B cell (primary cell): ENCODE measurements at regions of chr1 and their contacts with region 1.

Region 1: DNA sequence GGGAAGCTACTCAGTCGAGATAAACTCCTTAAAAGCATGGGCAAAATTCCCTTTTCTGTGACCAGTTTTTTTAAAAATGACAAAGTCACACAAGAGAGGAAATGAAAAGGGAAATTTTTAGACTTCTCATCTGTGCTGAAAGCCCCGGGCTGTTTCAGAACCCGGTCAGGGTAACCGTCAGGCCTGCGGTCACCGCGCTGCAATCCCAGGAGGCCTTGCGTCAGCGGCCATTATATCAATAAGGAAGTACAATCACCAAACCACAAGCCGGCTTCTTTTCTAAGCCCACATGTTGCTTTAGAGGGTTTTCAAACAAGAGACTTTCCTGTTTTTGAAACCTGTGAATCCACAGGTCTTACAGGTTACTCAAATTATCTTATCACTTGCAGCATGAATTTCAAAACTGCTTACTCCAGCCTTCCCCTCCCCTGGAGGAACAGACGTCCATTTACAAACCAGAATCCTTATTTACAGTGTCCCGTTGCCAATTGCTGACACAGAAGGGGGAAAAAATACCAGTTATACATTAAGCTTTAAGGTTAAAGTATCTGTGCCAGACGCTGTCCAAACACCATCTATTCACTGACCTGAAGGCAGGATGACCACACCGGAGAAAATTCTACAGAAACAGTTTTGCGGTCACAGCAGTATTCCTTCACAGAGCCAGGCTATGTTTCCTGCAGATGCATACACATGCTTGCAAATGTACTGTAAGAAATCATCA is 165.3 kb downstream of the TOMM20 start:
- DNase-seq: peak; percentile 95
- ATAC-seq: peak; percentile 94
- H3K4me3 ChIP-seq: peak overlapping the region in 4 of 5 experiments; percentile 20 to 53 (median 35)
- H3K4me3 Mint-ChIP-seq: peak overlapping the region; percentile 88
- H3K27ac ChIP-seq: peak overlapping the region; percentile 83 to 90
- H3K27ac Mint-ChIP-seq: peak overlapping the region; percentile 96
- H3K4me1 ChIP-seq: peaks cover 50 to 62% of the 10 kb centered on the region in 2 donors
- H3K4me1 Mint-ChIP-seq: peaks cover 59% of the 10 kb centered on the region
- H3K27me3 ChIP-seq: no peaks in the 10 kb centered on the region
- H3K27me3 Mint-ChIP-seq: no peaks in the 10 kb centered on the region
- CTCF ChIP-seq: no peak

Region 2: GRCh38 chr1:234170622-234171021 is 792.7 kb before region 1 on chr1:
- CTCF ChIA-PET with region 1: no interaction called
- POLR2A ChIA-PET with region 1: no interaction called
- intact Hi-C with region 1: no loop called
- DNase-seq: no peak
- ATAC-seq: no peak
- H3K4me3 ChIP-seq: no peak overlapping the region
- H3K4me3 Mint-ChIP-seq: no peak overlapping the region
- H3K27ac ChIP-seq: no peak overlapping the region
- H3K27ac Mint-ChIP-seq: no peak overlapping the region
- H3K4me1 ChIP-seq: no peaks in the 10 kb centered on the region
- H3K4me1 Mint-ChIP-seq: no peaks in the 10 kb centered on the region
- H3K27me3 ChIP-seq: peaks cover 0 to 6% (median 0%) of the 10 kb centered on the region in 4 experiments
- H3K27me3 Mint-ChIP-seq: peaks cover 12% of the 10 kb centered on the region
- CTCF ChIP-seq: no peak

Region 3: GRCh38 chr1:234842726-234843641 is 120.4 kb before region 1 on chr1:
- CTCF ChIA-PET with region 1: no interaction called
- POLR2A ChIA-PET with region 1: no interaction called
- intact Hi-C with region 1: loop called (anchors 10 kb)
- DNase-seq: peak; percentile 49
- ATAC-seq: peak; percentile 65
- H3K4me3 ChIP-seq: no peak overlapping the region
- H3K4me3 Mint-ChIP-seq: peak overlapping the region; percentile 50
- H3K27ac ChIP-seq: no peak overlapping the region
- H3K27ac Mint-ChIP-seq: peak overlapping the region; percentile 11
- H3K4me1 ChIP-seq: peaks cover 25 to 33% of the 10 kb centered on the region in 2 donors
- H3K4me1 Mint-ChIP-seq: peaks cover 40% of the 10 kb centered on the region
- H3K27me3 ChIP-seq: no peaks in the 10 kb centered on the region
- H3K27me3 Mint-ChIP-seq: no peaks in the 10 kb centered on the region
- CTCF ChIP-seq: no peak

Region 4: DNA sequence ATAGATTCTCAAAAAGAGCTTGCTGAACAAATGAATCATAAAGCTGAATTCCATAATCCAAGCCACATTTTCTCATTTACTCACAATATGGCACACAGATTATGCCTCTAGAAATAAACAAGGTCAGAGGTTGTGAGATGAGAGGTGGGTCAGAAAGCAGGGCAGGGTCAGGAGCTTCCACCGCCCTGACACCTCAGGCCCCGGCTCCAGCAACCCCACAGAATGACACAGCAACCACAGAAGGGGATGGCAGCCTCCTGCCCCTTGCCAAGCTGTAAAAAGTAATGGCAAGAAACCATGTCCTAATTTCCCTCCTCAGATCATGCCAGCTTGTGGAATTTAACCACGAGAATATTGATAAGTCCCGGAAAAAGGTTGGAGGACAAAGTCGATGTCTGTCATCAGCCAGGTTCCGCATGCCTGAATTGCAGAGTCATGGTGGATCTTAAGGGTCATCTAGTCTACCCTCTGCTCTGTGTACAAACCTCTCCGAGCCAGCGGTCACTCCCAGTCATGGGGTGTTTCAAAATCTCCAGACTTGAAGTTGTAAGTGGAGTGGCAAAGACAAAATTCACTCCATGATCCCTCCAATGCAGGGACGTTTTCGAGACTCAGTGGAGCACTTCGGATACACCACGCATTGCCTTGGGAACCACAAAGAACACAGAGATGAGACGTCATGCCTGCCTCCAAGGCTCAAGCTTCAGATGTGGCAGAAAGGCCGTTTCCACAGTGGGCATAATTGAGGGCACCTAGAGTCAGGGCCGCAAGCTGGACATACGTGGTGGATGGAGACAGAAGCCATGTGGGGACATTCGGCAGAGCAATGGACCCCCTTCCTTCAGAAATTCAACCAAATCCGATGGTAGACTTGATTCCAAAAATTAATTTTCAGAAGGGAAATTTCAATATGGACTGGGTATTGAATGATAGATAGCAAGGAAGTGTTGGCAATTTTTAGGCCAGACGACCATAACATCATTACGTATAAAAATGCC is 88.8 kb before region 1 on chr1:
- CTCF ChIA-PET with region 1: no interaction called
- POLR2A ChIA-PET with region 1: no interaction called
- intact Hi-C with region 1: no loop called
- DNase-seq: no peak
- ATAC-seq: no peak
- H3K4me3 ChIP-seq: no peak overlapping the region
- H3K4me3 Mint-ChIP-seq: no peak overlapping the region
- H3K27ac ChIP-seq: no peak overlapping the region
- H3K27ac Mint-ChIP-seq: no peak overlapping the region
- H3K4me1 ChIP-seq: peaks cover 0 to 8% of the 10 kb centered on the region in 2 donors
- H3K4me1 Mint-ChIP-seq: peaks cover 16% of the 10 kb centered on the region
- H3K27me3 ChIP-seq: no peaks in the 10 kb centered on the region
- H3K27me3 Mint-ChIP-seq: no peaks in the 10 kb centered on the region
- CTCF ChIP-seq: no peak

Region 5: GRCh38 chr1:234944439-234945344 is 18.6 kb before region 1 on chr1:
- CTCF ChIA-PET with region 1: no interaction called
- POLR2A ChIA-PET with region 1: no interaction called
- intact Hi-C with region 1: loop called (anchors 1 kb)
- DNase-seq: peak; percentile 41
- ATAC-seq: peak; percentile 55
- H3K4me3 ChIP-seq: peak overlapping the region in 1 of 5 experiments; percentile 14
- H3K4me3 Mint-ChIP-seq: peak overlapping the region; percentile 53
- H3K27ac ChIP-seq: peak overlapping the region; percentile 48 to 71
- H3K27ac Mint-ChIP-seq: peak overlapping the region; percentile 55
- H3K4me1 ChIP-seq: peaks cover 23 to 30% of the 10 kb centered on the region in 2 donors
- H3K4me1 Mint-ChIP-seq: peaks cover 35% of the 10 kb centered on the region
- H3K27me3 ChIP-seq: no peaks in the 10 kb centered on the region
- H3K27me3 Mint-ChIP-seq: no peaks in the 10 kb centered on the region
- CTCF ChIP-seq: no peak

Region 6: DNA sequence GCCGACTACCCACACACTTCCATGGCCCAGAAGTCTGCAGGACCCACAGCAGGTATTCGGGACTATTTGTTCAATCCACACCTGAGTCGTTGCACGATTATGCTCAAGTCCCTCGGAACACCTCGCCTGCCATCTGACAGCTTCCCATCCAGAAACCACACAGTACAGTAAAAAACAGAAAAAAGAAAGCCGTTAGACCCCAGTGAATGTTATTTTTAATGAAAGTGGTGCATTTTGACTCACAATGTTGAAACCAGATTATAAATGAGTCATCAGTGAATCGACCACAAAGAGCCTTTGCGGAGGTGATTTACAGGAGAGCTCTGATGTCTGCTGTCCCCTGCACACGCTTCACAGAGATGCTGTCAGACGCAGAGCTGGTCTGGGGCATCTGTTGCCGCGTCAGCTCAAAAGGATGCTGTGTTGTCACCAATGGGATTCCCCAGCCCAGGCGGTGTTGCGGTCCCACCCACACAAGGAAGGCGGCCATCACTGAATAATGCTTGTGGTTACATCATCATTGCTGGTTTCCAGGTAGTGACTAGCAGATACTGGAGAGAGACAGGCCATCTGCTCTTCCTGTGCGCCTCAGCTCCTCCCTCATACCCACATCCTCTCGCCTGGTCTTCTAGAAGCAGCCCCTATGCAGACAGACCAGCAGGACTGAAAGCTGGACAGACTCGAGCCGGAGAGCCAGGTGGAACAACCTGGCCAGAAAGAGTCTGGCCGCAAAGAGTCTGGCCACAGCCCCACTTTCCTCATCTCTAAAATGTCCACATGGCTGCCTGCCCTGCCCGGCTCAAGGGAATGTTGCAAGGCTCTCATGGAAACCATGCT is 48.5 kb after region 1 on chr1:
- CTCF ChIA-PET with region 1: interaction called, 3 read pairs
- POLR2A ChIA-PET with region 1: interaction called, 4 read pairs
- intact Hi-C with region 1: loop called (anchors 1 kb)
- DNase-seq: peak; percentile 97
- ATAC-seq: peak; percentile 87
- H3K4me3 ChIP-seq: peak overlapping the region; percentile 23 to 52 (median 32)
- H3K4me3 Mint-ChIP-seq: peak overlapping the region; percentile 76
- H3K27ac ChIP-seq: peak overlapping the region; percentile 89 to 96
- H3K27ac Mint-ChIP-seq: peak overlapping the region; percentile 96
- H3K4me1 ChIP-seq: peaks cover 50 to 65% of the 10 kb centered on the region in 2 donors
- H3K4me1 Mint-ChIP-seq: peaks cover 82% of the 10 kb centered on the region
- H3K27me3 ChIP-seq: no peaks in the 10 kb centered on the region
- H3K27me3 Mint-ChIP-seq: no peaks in the 10 kb centered on the region
- CTCF ChIP-seq: no peak

Region 7: DNA sequence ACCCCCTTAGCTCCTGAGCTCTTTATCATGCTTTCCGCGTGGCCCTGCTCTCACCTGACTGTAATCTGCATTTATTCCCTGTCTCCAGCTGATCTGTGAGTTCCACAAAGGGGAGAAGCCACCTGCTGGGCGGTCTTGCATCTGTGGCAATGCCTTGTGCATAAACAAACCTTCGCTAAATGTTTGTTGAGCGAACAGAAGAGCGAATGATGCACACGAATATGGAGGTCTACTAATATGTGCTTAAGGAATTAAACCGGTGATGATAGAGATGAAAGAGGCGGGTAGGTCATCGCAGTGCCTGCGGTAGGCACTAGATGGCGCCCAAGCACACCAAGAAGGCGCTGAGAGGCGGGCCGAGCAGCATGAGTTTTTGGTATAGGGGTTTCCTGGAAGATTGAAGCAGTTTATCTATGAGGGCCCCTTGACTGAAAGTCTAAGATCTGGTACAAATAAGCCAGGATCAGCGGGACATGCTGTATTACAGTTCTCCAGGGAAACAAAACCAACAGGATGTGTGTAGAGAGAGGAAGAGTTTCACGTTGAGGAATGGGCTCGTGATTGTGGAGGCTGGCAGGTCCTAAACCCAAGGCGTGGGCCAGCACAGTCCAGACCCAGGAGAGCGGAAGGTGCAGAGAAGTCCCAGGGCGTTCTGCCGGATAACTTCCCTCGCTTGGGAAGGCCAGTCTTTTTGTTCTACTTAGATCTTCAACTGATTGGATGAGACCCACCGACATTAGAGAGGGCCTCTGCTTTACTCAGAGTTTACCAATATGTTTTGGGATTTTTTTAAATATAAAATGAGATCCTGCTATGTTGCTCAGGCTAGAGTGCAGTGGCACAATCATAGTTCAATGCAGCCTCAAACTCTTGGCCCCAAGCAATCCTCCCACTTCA is 130.6 kb after region 1 on chr1:
- CTCF ChIA-PET with region 1: no interaction called
- POLR2A ChIA-PET with region 1: no interaction called
- intact Hi-C with region 1: no loop called
- DNase-seq: peak; percentile 84
- ATAC-seq: peak; percentile 99
- H3K4me3 ChIP-seq: no peak overlapping the region
- H3K4me3 Mint-ChIP-seq: no peak overlapping the region
- H3K27ac ChIP-seq: no peak overlapping the region
- H3K27ac Mint-ChIP-seq: peak overlapping the region; percentile 2
- H3K4me1 ChIP-seq: peaks cover 0 to 7% of the 10 kb centered on the region in 2 donors
- H3K4me1 Mint-ChIP-seq: peaks cover 5% of the 10 kb centered on the region
- H3K27me3 ChIP-seq: no peaks in the 10 kb centered on the region
- H3K27me3 Mint-ChIP-seq: peaks cover 5% of the 10 kb centered on the region
- CTCF ChIP-seq: peak; percentile 98